Calu3 (cell line): ENCODE measurements at regions of chr16 and their contacts with region 1.

Region 1: GRCh38 chr16:50806099-50807062 is 64.5 kb downstream of the CYLD start:
- DNase-seq: peak; percentile 83
- H3K4me3 Mint-ChIP-seq: peak overlapping the region; percentile 37
- H3K27ac Mint-ChIP-seq: no peak overlapping the region
- H3K4me1 Mint-ChIP-seq: peaks cover 5% of the 10 kb centered on the region
- H3K27me3 Mint-ChIP-seq: peaks cover 37% of the 10 kb centered on the region
- CTCF ChIP-seq: peak; percentile 83

Region 2: DNA sequence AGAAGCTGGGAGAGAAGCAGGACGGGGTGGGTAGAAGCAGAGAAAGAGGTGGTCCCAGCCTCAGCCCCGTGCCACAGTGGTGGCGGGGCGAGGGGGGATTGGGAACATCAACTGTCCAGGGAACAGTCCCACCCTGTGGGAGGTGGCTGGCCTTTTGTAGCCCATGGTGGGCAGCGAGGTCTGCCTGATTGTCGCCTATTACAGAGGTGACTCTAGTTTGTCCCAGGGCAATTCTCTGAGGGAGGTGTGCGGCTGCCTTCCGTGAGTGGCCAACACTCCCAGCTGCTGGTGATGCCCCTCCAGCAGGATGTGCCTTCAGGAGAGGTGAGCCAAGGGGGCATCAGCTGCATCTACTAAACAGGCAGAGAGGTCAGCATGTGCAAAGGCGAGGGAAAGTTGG is 432.6 kb before region 1 on chr16:
- CTCF ChIA-PET with region 1: interaction called, 14 read pairs
- intact Hi-C with region 1: loop called (anchors 1 kb)
- DNase-seq: no peak
- H3K4me3 Mint-ChIP-seq: no peak overlapping the region
- H3K27ac Mint-ChIP-seq: no peak overlapping the region
- H3K4me1 Mint-ChIP-seq: no peaks in the 10 kb centered on the region
- H3K27me3 Mint-ChIP-seq: peaks cover 41% of the 10 kb centered on the region
- CTCF ChIP-seq: no peak

Region 3: DNA sequence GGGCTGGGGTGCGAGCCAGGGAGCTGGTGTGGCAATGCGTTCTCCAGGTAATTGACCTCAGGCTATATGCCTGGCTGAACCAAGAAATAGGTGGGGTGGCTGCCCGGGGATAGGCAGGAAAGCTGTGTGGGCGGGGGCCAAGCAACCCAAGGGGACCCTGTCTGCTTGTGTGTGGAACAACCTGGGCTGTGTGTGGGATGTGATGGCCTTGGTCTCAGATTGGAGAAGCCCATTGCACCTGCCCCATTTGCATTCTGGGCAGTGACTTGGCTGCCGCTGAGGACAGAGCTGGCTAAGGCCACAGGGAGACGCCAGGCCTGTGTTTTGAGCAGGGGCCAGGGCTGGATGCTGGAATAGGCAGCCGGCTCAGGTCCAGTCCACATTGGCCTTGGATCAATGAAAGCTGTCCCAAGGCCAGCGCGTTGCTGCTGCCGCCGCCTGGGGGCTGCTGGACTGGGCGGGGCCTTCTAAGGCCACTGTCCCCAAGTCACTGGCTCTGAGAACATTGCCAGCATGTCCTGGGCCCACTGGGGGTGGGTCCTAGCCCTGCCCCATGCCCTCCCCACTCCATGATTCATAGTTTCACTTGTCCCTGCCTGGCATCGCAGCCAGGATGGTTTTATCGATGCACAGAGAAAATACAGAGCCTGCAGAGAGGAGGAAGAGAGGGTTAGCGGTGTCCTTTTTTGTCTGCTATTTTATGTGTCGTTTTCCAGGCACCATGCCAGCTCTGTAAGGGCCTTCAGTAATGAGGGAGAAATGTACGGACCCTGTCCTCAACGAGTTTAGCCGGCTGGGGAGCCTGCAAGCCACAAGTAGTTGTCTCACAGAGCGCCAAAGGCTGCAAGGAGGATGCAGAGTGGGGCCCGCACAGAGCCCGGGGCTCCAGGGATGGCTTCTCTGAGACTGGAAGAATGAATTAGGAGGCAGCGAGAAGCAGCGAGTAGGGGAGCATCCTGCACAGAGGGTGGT is 214.3 kb before region 1 on chr16:
- CTCF ChIA-PET with region 1: interaction called, 4 read pairs
- intact Hi-C with region 1: loop called (anchors 1 kb)
- DNase-seq: peak; percentile 35
- H3K4me3 Mint-ChIP-seq: no peak overlapping the region
- H3K27ac Mint-ChIP-seq: no peak overlapping the region
- H3K4me1 Mint-ChIP-seq: no peaks in the 10 kb centered on the region
- H3K27me3 Mint-ChIP-seq: peaks cover 97% of the 10 kb centered on the region
- CTCF ChIP-seq: no peak

Region 4: GRCh38 chr16:50671644-50672260 is 134.6 kb before region 1 on chr16:
- CTCF ChIA-PET with region 1: interaction called, 70 read pairs
- intact Hi-C with region 1: loop called (anchors 1 kb)
- DNase-seq: peak; percentile 59
- H3K4me3 Mint-ChIP-seq: no peak overlapping the region
- H3K27ac Mint-ChIP-seq: no peak overlapping the region
- H3K4me1 Mint-ChIP-seq: peaks cover 38% of the 10 kb centered on the region
- H3K27me3 Mint-ChIP-seq: peaks cover 5% of the 10 kb centered on the region
- CTCF ChIP-seq: peak; percentile 71

Region 5: GRCh38 chr16:50861970-50862411 is 55.6 kb after region 1 on chr16:
- CTCF ChIA-PET with region 1: interaction called, 22 read pairs
- intact Hi-C with region 1: no loop called
- DNase-seq: peak; percentile 65
- H3K4me3 Mint-ChIP-seq: peak overlapping the region; percentile 5
- H3K27ac Mint-ChIP-seq: peak overlapping the region; percentile 57
- H3K4me1 Mint-ChIP-seq: peaks cover 65% of the 10 kb centered on the region
- H3K27me3 Mint-ChIP-seq: no peaks in the 10 kb centered on the region
- CTCF ChIP-seq: no peak